HEK293 (cell line): ENCODE measurements at regions of chr15 and their contacts with region 1.

Region 1: DNA sequence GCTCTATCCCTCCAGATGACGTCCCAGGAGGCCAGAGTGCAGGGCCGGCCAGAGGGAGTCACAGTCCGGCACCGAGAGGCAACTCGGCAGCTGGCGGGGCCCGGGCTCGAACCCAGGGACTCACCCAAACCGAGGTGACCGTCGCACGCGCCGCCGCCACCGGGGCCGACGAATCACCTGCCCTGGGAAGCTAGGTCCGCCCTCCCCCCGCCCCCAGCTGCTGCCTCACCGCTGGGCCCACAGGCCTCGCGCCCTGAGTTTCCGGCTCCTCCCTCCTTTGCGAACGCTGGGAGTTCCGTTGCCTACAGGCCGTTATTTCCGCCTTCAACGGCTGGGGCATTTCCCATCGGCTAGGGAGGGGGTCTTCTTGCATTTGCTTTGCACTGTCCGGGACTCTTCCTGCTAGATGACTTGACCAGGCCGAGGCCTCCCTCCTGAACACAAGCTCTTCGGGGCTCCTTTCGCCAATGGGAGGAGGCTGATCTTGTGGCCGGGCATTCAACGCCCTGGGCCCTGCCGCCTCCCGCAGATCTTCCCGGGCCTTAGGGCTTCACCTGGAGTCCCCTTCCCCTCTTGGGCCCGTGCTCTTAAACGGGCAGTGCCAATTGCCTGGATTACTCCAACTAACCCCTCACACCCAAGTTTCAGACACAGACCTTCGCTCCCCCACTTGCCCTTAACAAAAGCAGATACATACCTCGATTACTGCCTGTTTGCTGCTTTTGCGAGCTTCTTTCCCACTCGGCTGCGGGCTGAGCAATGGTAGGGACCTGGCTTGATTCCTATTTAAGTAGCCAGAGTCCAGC is at the start of gene SNUPN:
- H3K4me3 ChIP-seq: peak within 1 kb of the TSS; percentile 96
- H3K27ac ChIP-seq: peak within 1 kb of the TSS; percentile 96
- H3K4me1 ChIP-seq: no peaks in the 10 kb centered on the region; the same call in 1 of the 2 replicates
- CTCF ChIP-seq: peak; percentile 6; the same call in 1 of the 2 replicates

Region 2: DNA sequence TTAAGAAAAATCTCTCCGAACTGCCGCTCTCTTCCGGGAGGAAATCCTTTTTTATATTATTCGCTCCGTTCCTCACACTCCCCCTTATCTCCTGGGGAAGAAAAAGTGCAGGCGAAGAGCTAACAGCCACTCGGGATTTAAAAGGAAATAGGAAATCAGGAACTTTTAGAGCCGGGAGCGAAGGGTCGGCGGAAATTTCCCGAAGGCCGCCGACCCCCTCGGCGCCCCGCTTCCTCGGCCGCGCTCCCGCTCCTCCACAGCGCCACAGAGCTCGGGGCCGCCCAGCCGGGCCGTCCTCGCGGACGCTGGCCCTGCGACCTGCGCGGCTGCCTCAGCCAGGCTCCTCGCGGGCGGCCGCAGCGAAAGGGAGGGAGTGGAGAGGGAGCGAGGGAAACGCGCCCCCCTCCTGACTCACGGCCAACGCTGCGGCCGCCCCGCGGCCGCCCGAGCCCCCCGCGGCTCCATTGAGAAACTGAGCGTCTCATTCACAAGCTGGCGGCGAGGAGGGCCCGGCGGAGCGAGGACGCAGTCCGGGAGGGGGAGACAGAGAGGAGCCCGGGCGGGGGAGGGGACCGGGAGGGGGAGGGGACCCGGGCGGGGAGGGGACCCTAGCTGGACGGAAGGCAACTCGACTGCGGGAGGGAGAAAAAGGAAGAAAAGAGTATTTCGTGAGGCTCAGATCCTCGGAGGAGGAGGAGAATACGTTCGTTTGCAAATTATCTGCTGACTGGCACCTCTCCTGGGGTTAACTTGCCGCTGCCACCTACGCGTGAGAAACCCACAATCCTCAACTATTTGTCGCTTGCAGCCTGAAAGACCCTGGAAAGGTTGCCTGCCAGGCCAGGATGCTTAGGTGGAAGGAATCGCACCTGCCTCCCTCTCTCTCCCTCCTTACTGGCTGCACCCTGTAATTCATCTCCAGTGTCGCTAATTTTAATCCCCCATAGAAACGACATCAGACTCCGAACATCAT is 46.5 kb before region 1 on chr15 and contains the start of gene PTPN9:
- CTCF ChIA-PET with region 1: interaction called, 3 read pairs
- POLR2A ChIA-PET with region 1: interaction called, 10 read pairs
- H3K4me3 ChIP-seq: peak within 1 kb of the TSS; percentile 84
- H3K27ac ChIP-seq: peak within 1 kb of the TSS; percentile 96
- H3K4me1 ChIP-seq: peaks cover 14% of the 10 kb centered on the region
- CTCF ChIP-seq: peak; percentile 79

Region 3: GRCh38 chr15:75606711-75607699 is 18.7 kb before region 1 on chr15:
- CTCF ChIA-PET with region 1: no interaction called
- POLR2A ChIA-PET with region 1: no interaction called
- H3K4me3 ChIP-seq: no peak overlapping the region
- H3K27ac ChIP-seq: no peak overlapping the region
- H3K4me1 ChIP-seq: no peaks in the 10 kb centered on the region
- CTCF ChIP-seq: no peak

Region 4: GRCh38 chr15:75720787-75721479 is 95.2 kb after region 1 on chr15:
- CTCF ChIA-PET with region 1: no interaction called
- POLR2A ChIA-PET with region 1: no interaction called
- H3K4me3 ChIP-seq: no peak overlapping the region
- H3K27ac ChIP-seq: no peak overlapping the region
- H3K4me1 ChIP-seq: no peaks in the 10 kb centered on the region; the same call in 1 of the 2 replicates
- CTCF ChIP-seq: peak; percentile 96

Region 5: DNA sequence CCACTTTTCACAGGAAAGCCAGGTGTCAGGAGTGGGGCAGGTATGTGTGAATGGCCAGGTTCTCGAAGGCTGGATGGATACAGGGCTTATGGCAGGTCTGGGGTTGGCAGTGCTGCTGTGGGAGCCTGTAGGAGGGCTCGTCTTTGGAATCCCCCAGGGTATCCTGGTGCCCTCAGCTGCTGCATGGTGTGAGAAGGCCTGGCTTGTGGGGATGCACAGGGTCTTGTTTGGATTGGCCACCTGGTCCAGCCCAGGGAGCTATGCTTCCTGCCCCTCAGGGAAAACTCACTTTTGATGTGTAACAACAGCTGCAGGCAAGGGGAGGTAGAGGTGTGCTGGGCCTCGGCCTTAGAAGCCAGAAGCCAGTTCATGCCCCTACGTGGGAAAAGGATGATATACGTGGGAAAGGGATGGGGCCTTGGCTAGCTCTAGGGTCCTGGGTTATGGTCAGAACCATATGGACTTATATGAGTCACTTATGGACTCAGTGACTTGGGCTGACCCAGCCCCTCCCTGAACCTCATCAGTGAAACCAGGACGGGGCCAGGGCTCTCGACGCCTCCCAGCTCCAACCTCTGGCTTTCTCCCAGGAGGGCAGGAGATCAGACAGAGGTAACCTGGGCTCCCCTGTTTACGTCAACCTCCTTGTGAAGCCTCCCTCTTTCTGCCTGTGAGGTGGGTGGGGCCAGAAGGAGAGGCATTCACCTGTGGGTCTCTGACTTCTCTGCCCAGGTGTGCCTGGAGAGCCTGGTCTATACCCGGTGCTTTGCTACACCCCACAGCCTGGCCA is 124.7 kb after region 1 on chr15:
- CTCF ChIA-PET with region 1: no interaction called
- POLR2A ChIA-PET with region 1: no interaction called
- H3K4me3 ChIP-seq: no peak overlapping the region
- H3K27ac ChIP-seq: no peak overlapping the region
- H3K4me1 ChIP-seq: no peaks in the 10 kb centered on the region
- CTCF ChIP-seq: no peak

Region 6: DNA sequence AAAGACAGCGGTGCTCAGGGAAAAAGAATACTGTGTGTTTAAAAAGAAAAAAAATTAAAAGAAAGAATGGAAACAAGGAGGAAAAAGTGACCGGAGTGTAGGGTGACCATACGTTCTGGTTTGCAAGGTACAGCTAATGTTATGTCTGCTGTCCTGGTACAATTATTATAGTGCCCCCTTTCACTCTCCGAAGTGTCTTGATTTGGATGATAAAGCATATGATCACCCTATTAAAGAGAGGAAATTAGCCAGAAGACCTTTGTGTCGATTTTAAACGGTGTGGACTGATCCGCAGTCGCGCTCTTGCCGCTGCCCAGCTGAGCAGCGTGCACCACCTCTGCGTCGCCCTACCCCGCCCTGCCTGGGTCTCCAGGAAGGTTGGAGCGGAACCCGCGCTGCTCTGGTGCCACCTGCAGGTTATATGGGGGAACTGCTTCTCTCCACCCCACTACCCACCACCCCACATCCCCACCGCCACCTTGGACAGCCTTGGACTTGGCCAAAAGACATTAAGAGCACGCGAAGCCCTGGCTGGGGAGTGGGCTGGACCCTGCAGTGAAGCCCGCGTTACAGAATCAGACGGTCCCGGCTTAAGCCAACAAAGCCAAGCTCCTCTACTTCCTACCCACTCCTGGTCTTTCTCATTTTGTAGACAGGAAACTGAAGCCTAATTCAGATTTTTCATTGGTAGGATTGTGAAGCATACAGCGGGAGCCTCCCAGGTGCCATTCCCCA is 176.3 kb after region 1 on chr15:
- CTCF ChIA-PET with region 1: no interaction called
- POLR2A ChIA-PET with region 1: no interaction called
- H3K4me3 ChIP-seq: no peak overlapping the region
- H3K27ac ChIP-seq: no peak overlapping the region
- H3K4me1 ChIP-seq: no peaks in the 10 kb centered on the region
- CTCF ChIP-seq: peak; percentile 92